Activated B cell treated with CpG ODN at 0.5 μM for 24 hours (primary cell): ENCODE measurements at regions of chr10 and their contacts with region 1.

Region 1: DNA sequence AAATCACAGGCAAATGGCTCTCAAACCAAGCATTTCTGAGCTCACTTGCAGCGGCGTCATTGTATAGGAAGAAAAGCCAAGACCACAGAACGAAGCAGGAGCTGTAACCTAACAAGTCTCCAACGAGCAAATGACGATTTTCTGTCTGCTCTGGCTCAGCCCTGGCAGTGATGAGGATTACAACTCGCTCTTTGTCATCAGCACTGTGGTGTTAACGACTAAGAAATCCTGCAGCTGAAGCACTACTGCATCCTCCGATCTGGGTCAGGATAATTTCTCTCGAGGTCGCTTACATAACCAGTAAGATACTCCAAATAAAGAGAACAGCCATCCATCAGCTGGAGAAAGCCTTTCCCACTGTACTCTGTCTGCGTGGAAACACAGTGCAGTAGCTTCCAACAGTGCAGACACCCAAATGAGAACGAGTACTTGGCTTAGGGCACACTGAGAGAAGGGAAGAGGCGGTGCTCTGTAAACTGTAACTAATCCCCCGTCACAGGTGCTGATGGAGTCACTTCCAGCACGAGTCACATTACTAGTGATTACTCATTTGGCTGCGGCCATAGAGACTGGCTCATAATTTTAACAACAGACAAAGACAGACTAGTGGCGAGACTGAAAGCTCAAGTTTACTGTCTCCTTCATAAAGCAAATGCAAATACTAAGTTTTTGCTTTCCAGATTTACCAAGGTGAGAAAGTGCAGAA is 135.8 kb downstream of the NRBF2 start:
- DNase-seq: peak; percentile 52
- ATAC-seq: peak; percentile 89
- H3K4me3 Mint-ChIP-seq: peak overlapping the region; percentile 99
- H3K27ac Mint-ChIP-seq: peak overlapping the region; percentile 98
- H3K4me1 Mint-ChIP-seq: peaks cover 35% of the 10 kb centered on the region
- H3K27me3 Mint-ChIP-seq: no peaks in the 10 kb centered on the region
- CTCF ChIP-seq: no peak

Region 2: DNA sequence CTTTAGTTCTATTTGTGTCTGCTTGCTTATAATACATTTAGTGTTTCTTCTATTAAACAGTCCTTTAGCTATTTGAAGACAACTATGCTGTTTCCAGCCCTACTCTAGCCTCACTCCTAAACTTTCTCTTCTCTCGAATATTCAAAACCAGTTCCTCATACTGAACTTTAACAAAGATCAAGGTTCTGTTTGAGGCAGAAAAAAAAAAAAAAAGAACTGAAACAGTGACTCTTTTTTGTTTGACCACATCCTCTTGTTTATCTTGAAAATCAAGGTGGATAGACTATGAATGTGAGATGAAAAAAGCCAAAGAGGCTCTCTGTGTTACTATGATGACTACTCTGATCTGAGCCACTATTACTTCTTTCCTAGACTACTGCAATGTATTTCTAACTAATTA is 740.5 kb before region 1 on chr10:
- CTCF ChIA-PET with region 1: no interaction called
- POLR2A ChIA-PET with region 1: no interaction called
- intact Hi-C with region 1: loop called (anchors 5 kb)
- DNase-seq: no peak
- ATAC-seq: peak; percentile 59
- H3K4me3 Mint-ChIP-seq: peak overlapping the region; percentile 64
- H3K27ac Mint-ChIP-seq: peak overlapping the region; percentile 92
- H3K4me1 Mint-ChIP-seq: peaks cover 58% of the 10 kb centered on the region
- H3K27me3 Mint-ChIP-seq: no peaks in the 10 kb centered on the region
- CTCF ChIP-seq: no peak

Region 3: DNA sequence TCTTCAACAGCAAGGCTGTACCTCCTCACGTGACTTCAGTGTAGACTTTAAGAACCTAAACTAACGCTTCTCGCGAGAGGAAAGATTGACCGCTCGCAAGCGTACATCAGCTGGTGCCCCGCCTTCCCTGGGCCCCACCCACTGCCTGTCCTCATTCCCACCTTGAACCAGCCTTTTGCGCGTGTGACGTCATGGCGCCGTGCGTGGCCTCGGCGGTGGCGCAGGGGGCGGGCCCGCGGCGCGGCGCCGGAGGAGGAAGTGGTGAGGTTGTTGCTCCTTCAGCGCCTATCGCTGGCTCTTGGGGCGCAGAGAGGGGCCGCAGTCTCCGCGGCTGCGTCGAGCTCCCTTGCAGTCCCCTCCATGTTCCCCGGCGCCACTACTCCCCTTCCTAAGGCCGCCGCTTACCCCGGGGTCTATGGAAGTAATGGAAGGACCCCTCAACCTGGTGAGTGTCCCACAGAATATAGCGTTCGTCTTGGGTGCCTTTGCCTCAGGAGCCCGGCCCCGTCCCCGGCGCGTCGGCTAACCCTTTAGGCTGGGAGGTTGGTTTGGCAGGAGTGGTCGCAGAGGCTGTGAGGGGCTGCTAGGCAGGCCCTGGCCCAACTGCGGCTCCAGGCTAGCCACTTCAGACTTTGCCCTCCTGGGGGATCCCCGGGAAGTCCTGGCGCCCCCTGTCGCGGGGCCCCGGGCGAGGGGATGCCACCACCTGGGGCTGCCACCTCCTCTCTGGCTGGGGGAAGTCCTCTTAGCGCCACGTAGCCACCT is 135.7 kb before region 1 on chr10 and contains the start of gene NRBF2:
- CTCF ChIA-PET with region 1: no interaction called
- POLR2A ChIA-PET with region 1: interaction called, 3 read pairs
- intact Hi-C with region 1: loop called (anchors 2 kb)
- DNase-seq: peak; percentile 97
- ATAC-seq: peak; percentile 88
- H3K4me3 Mint-ChIP-seq: peak within 1 kb of the TSS; percentile 93
- H3K27ac Mint-ChIP-seq: peak within 1 kb of the TSS; percentile 92
- H3K4me1 Mint-ChIP-seq: peaks cover 44% of the 10 kb centered on the region
- H3K27me3 Mint-ChIP-seq: no peaks in the 10 kb centered on the region
- CTCF ChIP-seq: no peak
- total RNA-seq, gene NRBF2: 23.8 and 26.9 TPM in 2 replicates

Region 4: DNA sequence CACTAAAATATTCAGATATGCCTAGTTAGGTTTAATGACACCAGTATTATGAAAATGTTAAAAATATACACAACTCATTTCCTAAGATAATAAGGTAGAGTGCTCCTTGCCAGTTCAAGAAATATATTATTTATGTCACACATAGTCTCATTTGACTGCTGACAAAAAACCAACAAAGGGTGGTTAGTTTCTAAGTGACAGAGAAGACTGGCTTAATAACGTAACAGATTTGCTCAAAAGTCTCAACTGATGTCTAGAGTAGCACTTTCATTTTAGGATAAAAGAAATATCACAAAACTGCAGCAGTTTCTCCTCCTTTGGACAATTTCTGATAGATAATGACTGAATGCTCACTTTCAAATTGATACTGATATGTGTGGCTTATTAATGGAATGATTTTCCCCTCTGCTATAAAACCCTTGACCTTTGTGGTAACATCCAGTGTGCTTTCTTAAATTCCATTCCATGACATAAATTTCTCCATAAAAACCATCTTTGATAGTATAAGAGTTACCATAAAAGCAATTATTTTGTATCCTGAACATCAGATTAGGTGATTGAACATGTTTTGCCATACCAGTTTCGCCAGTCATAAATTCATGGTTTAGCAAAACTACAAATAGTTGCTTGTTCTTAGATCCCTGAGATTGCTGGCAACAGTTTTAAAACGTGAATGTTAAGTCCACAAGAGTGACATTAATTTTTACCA is 41.6 kb before region 1 on chr10:
- CTCF ChIA-PET with region 1: no interaction called
- POLR2A ChIA-PET with region 1: interaction called, 14 read pairs
- intact Hi-C with region 1: no loop called
- DNase-seq: no peak
- ATAC-seq: no peak
- H3K4me3 Mint-ChIP-seq: peak overlapping the region; percentile 12
- H3K27ac Mint-ChIP-seq: peak overlapping the region; percentile 59
- H3K4me1 Mint-ChIP-seq: peaks cover 71% of the 10 kb centered on the region
- H3K27me3 Mint-ChIP-seq: no peaks in the 10 kb centered on the region
- CTCF ChIP-seq: no peak

Region 5: GRCh38 chr10:63256009-63256773 is 12.8 kb before region 1 on chr10:
- CTCF ChIA-PET with region 1: interaction called, 6 read pairs
- POLR2A ChIA-PET with region 1: interaction called, 78 read pairs
- intact Hi-C with region 1: no loop called
- DNase-seq: no peak
- ATAC-seq: peak; percentile 40
- H3K4me3 Mint-ChIP-seq: peak overlapping the region; percentile 73
- H3K27ac Mint-ChIP-seq: peak overlapping the region; percentile 84
- H3K4me1 Mint-ChIP-seq: peaks cover 94% of the 10 kb centered on the region
- H3K27me3 Mint-ChIP-seq: no peaks in the 10 kb centered on the region
- CTCF ChIP-seq: no peak

Region 6: DNA sequence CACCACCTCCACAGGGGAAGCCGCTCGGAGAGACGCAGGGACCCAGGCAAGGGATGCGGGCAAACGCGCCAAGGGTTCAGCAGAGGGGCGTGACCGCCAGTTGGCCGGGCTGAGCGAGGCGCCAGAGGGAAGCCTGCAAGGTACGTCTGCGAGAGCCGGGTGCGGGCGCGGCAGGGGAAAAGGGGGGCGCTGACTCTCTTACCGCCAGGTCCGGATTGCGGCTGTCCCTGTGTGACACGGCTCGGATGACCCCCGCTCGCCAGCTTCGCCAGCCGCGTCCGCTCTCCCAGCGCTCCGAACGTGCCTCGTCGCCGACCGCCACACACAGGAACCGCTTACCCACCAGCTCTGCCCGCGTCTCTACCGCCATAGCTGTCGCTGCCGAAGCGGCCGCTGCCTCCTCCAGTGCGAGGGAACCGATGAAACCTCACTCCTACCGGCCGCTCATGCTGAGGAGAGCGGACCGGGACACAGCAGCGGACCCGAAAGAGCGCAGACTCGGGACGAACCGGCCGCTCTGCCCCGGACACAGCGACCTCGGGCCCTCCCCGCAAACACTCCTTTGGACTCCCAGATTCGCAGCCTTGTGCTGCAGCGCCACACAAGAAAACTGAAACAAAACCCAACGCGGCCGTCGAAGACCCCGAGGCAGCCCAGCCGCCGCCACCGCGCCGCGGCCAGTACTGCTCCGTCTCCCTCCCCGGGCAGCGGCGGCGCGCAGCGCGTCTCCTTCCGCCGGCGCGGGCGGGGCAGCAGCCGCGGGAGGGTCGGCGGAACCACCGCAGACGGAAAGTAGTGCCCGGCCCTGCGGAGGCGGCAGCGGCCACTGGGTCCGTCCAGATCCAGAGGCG is 196.6 kb after region 1 on chr10 and contains the start of gene JMJD1C:
- CTCF ChIA-PET with region 1: interaction called, 4 read pairs
- POLR2A ChIA-PET with region 1: interaction called, 10 read pairs
- intact Hi-C with region 1: loop called (anchors 1 kb)
- DNase-seq: peak; percentile 74
- ATAC-seq: peak; percentile 74
- H3K4me3 Mint-ChIP-seq: peak within 1 kb of the TSS; percentile 97
- H3K27ac Mint-ChIP-seq: peak within 1 kb of the TSS; percentile 92
- H3K4me1 Mint-ChIP-seq: peaks cover 20% of the 10 kb centered on the region
- H3K27me3 Mint-ChIP-seq: no peaks in the 10 kb centered on the region
- CTCF ChIP-seq: no peak
- total RNA-seq, gene JMJD1C: 167 and 176 TPM in 2 replicates

Region 7: GRCh38 chr10:63629363-63630084 is 360.6 kb after region 1 on chr10:
- CTCF ChIA-PET with region 1: interaction called, 11 read pairs
- POLR2A ChIA-PET with region 1: interaction called, 35 read pairs
- intact Hi-C with region 1: loop called (anchors 1 kb)
- DNase-seq: peak; percentile 67
- ATAC-seq: peak; percentile 60
- H3K4me3 Mint-ChIP-seq: peak overlapping the region; percentile 91
- H3K27ac Mint-ChIP-seq: peak overlapping the region; percentile 94
- H3K4me1 Mint-ChIP-seq: peaks cover 28% of the 10 kb centered on the region
- H3K27me3 Mint-ChIP-seq: no peaks in the 10 kb centered on the region
- CTCF ChIP-seq: peak; percentile 38